ENCODE measurements at regions of chr2 and their contacts with region 1.

Region 1: GRCh38 chr2:126981268-126981875 is 82.7 kb downstream of the TEX51 start:
- DNase-seq: no peak
- ATAC-seq: no peak
- H3K4me3 ChIP-seq: no peak overlapping the region
- H3K27ac ChIP-seq: no peak overlapping the region
- H3K4me1 ChIP-seq: peaks cover 0 to 8% of the 10 kb centered on the region in 2 experiments; a peak in 2 of 5 replicates
- H3K27me3 ChIP-seq: peaks cover 6 to 43% of the 10 kb centered on the region in 2 experiments
- CTCF ChIP-seq: no peak
- EP300 ChIP-seq: no peak
- POLR2A ChIP-seq: no peak
- RAD21 ChIP-seq: no peak

Region 2: GRCh38 chr2:126891681-126892500 is 89.5 kb before region 1 on chr2:
- CTCF ChIA-PET with region 1: no interaction called
- POLR2A ChIA-PET with region 1: no interaction called
- in situ Hi-C with region 1: no loop called
- intact Hi-C with region 1: no loop called
- DNase-seq: no peak
- ATAC-seq: no peak
- H3K4me3 ChIP-seq: no peak overlapping the region
- H3K27ac ChIP-seq: no peak overlapping the region
- H3K4me1 ChIP-seq: no peaks in the 10 kb centered on the region; a peak in 1 of 5 replicates
- H3K27me3 ChIP-seq: peaks cover 7 to 34% of the 10 kb centered on the region in 2 experiments; a peak in 4 of 5 replicates
- CTCF ChIP-seq: no peak
- EP300 ChIP-seq: no peak
- POLR2A ChIP-seq: no peak
- RAD21 ChIP-seq: no peak

Region 3: GRCh38 chr2:127034883-127035611 is 53.7 kb after region 1 on chr2:
- CTCF ChIA-PET with region 1: no interaction called
- POLR2A ChIA-PET with region 1: no interaction called
- in situ Hi-C with region 1: no loop called
- intact Hi-C with region 1: loop called (anchors 5 kb)
- DNase-seq: no peak
- ATAC-seq: peak; percentile 53; the same call in 1 of the 3 replicates
- H3K4me3 ChIP-seq: no peak overlapping the region
- H3K27ac ChIP-seq: no peak overlapping the region
- H3K4me1 ChIP-seq: no peaks in the 10 kb centered on the region
- H3K27me3 ChIP-seq: peaks cover 18 to 42% of the 10 kb centered on the region in 2 experiments; a peak in 4 of 5 replicates
- CTCF ChIP-seq: no peak
- EP300 ChIP-seq: no peak
- POLR2A ChIP-seq: no peak
- RAD21 ChIP-seq: no peak

Region 4: DNA sequence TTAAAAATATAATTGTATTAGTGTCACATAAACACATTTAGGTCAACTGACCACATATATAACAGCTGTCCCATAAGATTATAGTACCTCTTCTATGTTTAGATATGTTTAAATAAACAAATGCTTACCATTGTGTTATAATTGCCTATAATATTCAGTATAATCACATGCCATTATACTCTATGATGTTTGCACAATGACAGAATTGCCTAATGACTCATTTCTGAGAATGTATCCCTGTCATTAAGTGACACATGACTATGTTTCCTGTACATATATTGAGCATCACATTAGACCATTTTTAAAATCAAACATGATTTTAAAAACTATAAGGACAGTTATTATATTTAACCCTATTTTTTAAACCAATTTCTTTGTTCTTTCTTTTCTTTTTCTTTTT is 1247.5 kb after region 1 on chr2:
- CTCF ChIA-PET with region 1: no interaction called
- POLR2A ChIA-PET with region 1: no interaction called
- in situ Hi-C with region 1: no loop called
- intact Hi-C with region 1: no loop called
- DNase-seq: no peak
- ATAC-seq: no peak
- H3K4me3 ChIP-seq: no peak overlapping the region
- H3K27ac ChIP-seq: no peak overlapping the region
- H3K4me1 ChIP-seq: peaks cover 0 to 13% of the 10 kb centered on the region in 2 experiments; a peak in 2 of 5 replicates
- H3K27me3 ChIP-seq: peaks cover 1 to 3% of the 10 kb centered on the region in 2 experiments; a peak in 2 of 5 replicates
- CTCF ChIP-seq: no peak
- EP300 ChIP-seq: no peak
- POLR2A ChIP-seq: no peak
- RAD21 ChIP-seq: no peak

Measured in K562 (cell line).